ENCODE measurements at regions of chr19 and their contacts with region 1.

Region 1: DNA sequence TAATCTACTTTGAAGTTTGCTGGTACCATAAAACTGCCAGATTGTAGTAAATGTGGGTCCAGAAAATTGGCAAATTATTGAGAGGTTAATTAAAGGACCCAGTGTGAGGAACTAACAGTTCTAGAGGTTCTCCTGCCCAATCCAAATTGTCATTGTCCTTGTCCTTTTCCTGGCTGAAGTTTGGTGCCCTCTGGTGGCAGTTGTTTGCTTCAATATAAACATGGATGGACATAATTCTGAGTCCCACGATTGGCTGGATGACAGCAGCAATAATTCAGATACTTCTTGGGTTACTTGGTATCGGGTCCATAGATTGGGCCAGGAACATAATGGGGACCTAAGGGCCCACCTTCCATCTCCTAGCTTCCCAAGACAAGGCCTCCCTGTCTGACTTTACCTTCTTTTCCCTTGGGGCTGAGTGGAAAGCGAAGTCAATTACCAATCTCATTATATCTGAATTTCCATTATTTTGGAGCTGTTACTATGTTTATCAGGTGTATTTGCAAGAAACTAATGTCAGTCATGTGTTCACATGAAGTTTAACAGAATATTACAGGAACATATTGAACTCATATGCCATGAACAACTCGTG is 33.8 kb upstream of the GARRE1 start:
- DNase-seq: peak; percentile 31
- H3K4me3 ChIP-seq: no peak overlapping the region
- H3K27ac ChIP-seq: no peak overlapping the region
- H3K4me1 ChIP-seq: peaks cover 20% of the 10 kb centered on the region
- H3K27me3 ChIP-seq: no peaks in the 10 kb centered on the region
- CTCF ChIP-seq: peak; percentile 78 to 80

Region 2: GRCh38 chr19:34171877-34172660 is 48.5 kb before region 1 on chr19 and contains the start of gene LSM14A:
- CTCF ChIA-PET with region 1: no interaction called
- dilution Hi-C with region 1: no loop called
- in situ Hi-C with region 1: no loop called
- intact Hi-C with region 1: loop called (anchors 2 kb)
- DNase-seq: peak; percentile 79
- H3K4me3 ChIP-seq: peak within 1 kb of the TSS; percentile 93 to 96 (median 95)
- H3K27ac ChIP-seq: peak within 1 kb of the TSS; percentile 89
- H3K4me1 ChIP-seq: peaks cover 13% of the 10 kb centered on the region
- H3K27me3 ChIP-seq: no peaks in the 10 kb centered on the region
- CTCF ChIP-seq: no peak
- total RNA-seq, gene LSM14A: 57.3 to 83.4 TPM

Measured in mammary epithelial cell (primary cell).